ENCODE measurements at regions of chr19 and their contacts with region 1.

Region 1: GRCh38 chr19:4791170-4792018 is at the start of gene FEM1A:
- DNase-seq: peak; percentile 99
- ATAC-seq: peak; percentile 90 to 96 (median 94)
- H3K4me3 ChIP-seq: peak within 1 kb of the TSS; percentile 87
- H3K27ac ChIP-seq: peak within 1 kb of the TSS; percentile 93
- H3K4me1 ChIP-seq: peaks cover 32% of the 10 kb centered on the region
- H3K27me3 ChIP-seq: no peaks in the 10 kb centered on the region
- CTCF ChIP-seq: peak; percentile 98
- total RNA-seq, gene FEM1A: 135 to 210 (median 149) TPM

Region 2: DNA sequence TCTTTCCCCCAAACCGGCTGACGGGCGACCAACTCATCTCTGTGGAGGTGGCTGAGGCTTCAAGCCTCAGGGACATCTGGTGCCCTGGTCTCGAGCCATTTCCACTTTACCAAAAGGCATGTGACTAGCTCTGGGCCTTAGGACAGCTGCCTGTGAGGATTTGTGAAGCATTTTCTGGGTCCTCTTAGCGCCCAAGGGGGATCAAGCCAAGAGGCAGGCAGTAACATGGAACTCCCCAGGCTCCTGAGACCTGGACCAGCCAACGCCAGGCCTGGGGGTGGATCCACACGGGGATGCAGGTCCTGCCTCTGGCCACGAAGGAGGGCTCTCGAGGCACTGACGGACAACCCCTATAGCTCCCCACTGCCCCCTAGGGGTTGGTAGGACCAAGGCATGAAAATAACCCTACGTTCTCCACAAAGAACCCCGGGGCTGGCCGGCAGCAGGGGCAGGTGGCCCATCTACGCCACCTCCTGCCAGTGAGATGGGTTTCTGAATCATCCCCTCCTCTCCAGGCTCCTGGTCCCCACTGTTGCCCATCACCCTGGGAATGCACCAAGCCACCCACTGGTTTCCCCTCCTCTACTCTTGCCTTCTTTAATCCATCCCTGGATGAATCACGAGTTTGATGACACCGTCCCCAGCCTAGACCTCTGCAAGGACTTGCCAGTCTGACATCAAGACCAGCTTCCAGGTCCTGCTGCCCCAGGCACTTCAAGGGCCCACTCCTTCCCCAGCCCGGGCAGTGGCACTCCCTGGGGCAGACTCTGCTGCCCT is 114.3 kb before region 1 on chr19:
- intact Hi-C with region 1: no loop called
- DNase-seq: peak; percentile 69 to 87
- ATAC-seq: peak; percentile 80 to 83 (median 82)
- H3K4me3 ChIP-seq: peak overlapping the region; percentile 20
- H3K27ac ChIP-seq: peak overlapping the region; percentile 84
- H3K4me1 ChIP-seq: peaks cover 11% of the 10 kb centered on the region
- H3K27me3 ChIP-seq: no peaks in the 10 kb centered on the region
- CTCF ChIP-seq: peak; percentile 66

Region 3: GRCh38 chr19:4723367-4724187 is 67.8 kb before region 1 on chr19 and contains the start of gene DPP9:
- intact Hi-C with region 1: loop called in 1 of 2 experiments (anchors 5 kb)
- DNase-seq: peak; percentile 98 to 99
- ATAC-seq: peak; percentile 91 to 97 (median 95)
- H3K4me3 ChIP-seq: peak within 1 kb of the TSS; percentile 97
- H3K27ac ChIP-seq: peak within 1 kb of the TSS; percentile 96
- H3K4me1 ChIP-seq: peaks cover 27% of the 10 kb centered on the region
- H3K27me3 ChIP-seq: no peaks in the 10 kb centered on the region
- CTCF ChIP-seq: peak; percentile 17
- total RNA-seq, gene DPP9: 55.9 to 97.4 (median 78.6) TPM

Region 4: GRCh38 chr19:4815426-4816201 is 24.2 kb after region 1 on chr19:
- intact Hi-C with region 1: no loop called
- DNase-seq: peak; percentile 87 to 92
- ATAC-seq: peak; percentile 82 to 88 (median 85)
- H3K4me3 ChIP-seq: peak overlapping the region; percentile 45
- H3K27ac ChIP-seq: peak overlapping the region; percentile 93
- H3K4me1 ChIP-seq: peaks cover 35% of the 10 kb centered on the region
- H3K27me3 ChIP-seq: no peaks in the 10 kb centered on the region
- CTCF ChIP-seq: no peak